ENCODE measurements at regions of chr7 and their contacts with region 1.

Region 1: GRCh38 chr7:112476390-112477052 is 4.3 kb upstream of the LSMEM1 start:
- DNase-seq: no peak
- ATAC-seq: no peak
- H3K4me3 ChIP-seq: no peak overlapping the region
- H3K4me3 Mint-ChIP-seq: no peak overlapping the region
- H3K27ac ChIP-seq: no peak overlapping the region
- H3K27ac Mint-ChIP-seq: no peak overlapping the region
- H3K4me1 ChIP-seq: no peaks in the 10 kb centered on the region
- H3K4me1 Mint-ChIP-seq: peaks cover 0 to 11% (median 2%) of the 10 kb centered on the region in 3 donors
- H3K27me3 ChIP-seq: no peaks in the 10 kb centered on the region
- H3K27me3 Mint-ChIP-seq: no peaks in the 10 kb centered on the region

Region 2: GRCh38 chr7:112462236-112462635 is 14.3 kb before region 1 on chr7:
- CTCF ChIA-PET with region 1: interaction called, 3 to 4 read pairs
- POLR2A ChIA-PET with region 1: interaction called, 11 to 15 read pairs
- DNase-seq: no peak
- ATAC-seq: no peak
- H3K4me3 ChIP-seq: no peak overlapping the region
- H3K4me3 Mint-ChIP-seq: no peak overlapping the region
- H3K27ac ChIP-seq: no peak overlapping the region
- H3K27ac Mint-ChIP-seq: no peak overlapping the region
- H3K4me1 ChIP-seq: no peaks in the 10 kb centered on the region
- H3K4me1 Mint-ChIP-seq: peaks cover 4 to 6% (median 6%) of the 10 kb centered on the region in 3 donors
- H3K27me3 ChIP-seq: no peaks in the 10 kb centered on the region
- H3K27me3 Mint-ChIP-seq: no peaks in the 10 kb centered on the region

Measured in T-cell (primary cell).